Activated CD4-positive, alpha-beta memory T cell treated with anti-CD3 and anti-CD28 coated beads for 36 hours (primary cell): ENCODE measurements at regions of chr10 and their contacts with region 1.

Region 1: DNA sequence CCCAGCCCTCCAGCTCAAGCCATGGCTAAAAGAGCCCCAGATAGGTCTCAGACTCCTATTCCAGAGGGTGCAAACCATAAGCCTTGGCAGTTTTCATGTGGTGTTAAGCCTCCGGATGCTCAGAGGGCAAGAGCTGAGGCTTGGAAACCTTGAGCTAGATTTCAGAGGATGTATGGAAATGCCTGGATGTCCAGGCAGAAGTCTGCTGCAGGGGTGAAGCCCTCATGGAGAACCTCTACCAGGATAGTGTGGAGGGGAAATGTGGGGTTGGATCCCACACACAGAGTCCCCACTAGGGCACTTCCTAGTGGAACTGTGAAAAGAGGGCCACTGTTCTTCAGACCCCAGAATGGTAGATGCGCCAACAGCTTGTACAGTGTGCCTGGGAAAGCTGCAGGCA is 13.2 kb upstream of the HPSE2 start:
- DNase-seq: no peak
- H3K4me3 Mint-ChIP-seq: no peak overlapping the region
- H3K27ac Mint-ChIP-seq: no peak overlapping the region
- H3K4me1 Mint-ChIP-seq: no peaks in the 10 kb centered on the region
- H3K27me3 Mint-ChIP-seq: peaks cover 16% of the 10 kb centered on the region

Region 2: DNA sequence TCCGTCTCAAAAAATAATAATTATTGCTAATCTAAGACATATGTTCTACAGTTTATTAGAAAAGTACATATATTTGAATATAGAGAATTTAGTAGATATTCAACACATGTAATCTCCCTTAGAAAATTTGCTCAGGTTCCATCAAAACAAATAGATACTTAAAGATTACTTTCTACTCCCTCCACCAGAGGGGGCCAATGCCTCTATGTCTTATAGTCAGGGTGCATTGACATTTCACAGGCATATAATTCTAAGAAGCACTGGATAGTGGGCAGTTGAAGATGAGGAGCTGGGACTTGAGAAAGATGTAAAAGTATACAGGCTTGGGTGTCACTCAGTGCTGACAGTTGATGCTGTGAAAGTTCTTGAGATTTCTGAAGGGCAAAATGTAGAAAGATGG is 500.5 kb before region 1 on chr10:
- CTCF ChIA-PET with region 1: no interaction called
- POLR2A ChIA-PET with region 1: no interaction called
- intact Hi-C with region 1: loop called (anchors 2 kb)
- DNase-seq: no peak
- H3K4me3 Mint-ChIP-seq: no peak overlapping the region
- H3K27ac Mint-ChIP-seq: no peak overlapping the region
- H3K4me1 Mint-ChIP-seq: no peaks in the 10 kb centered on the region
- H3K27me3 Mint-ChIP-seq: no peaks in the 10 kb centered on the region

Region 3: DNA sequence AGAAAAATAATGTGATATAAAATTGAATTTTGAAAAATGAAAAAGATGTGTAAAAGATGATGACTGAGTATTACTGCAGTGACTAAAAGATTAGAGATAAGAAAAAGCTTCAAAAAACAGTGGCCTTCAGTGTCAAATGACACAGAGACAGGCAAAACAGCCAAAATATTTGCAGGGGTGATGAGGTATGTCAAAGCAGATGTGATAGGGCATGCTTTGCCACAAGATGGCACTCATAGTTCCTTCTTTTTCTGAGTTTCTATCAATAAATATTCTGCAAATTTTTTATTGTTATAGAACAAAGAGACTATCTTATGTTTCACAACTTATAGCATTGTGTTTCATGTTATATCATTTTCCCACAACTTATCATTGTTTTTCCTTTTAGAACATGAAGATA is 458.0 kb before region 1 on chr10:
- CTCF ChIA-PET with region 1: no interaction called
- POLR2A ChIA-PET with region 1: no interaction called
- intact Hi-C with region 1: loop called (anchors 5 kb)
- DNase-seq: no peak
- H3K4me3 Mint-ChIP-seq: no peak overlapping the region
- H3K27ac Mint-ChIP-seq: no peak overlapping the region
- H3K4me1 Mint-ChIP-seq: no peaks in the 10 kb centered on the region
- H3K27me3 Mint-ChIP-seq: peaks cover 1% of the 10 kb centered on the region

Region 4: DNA sequence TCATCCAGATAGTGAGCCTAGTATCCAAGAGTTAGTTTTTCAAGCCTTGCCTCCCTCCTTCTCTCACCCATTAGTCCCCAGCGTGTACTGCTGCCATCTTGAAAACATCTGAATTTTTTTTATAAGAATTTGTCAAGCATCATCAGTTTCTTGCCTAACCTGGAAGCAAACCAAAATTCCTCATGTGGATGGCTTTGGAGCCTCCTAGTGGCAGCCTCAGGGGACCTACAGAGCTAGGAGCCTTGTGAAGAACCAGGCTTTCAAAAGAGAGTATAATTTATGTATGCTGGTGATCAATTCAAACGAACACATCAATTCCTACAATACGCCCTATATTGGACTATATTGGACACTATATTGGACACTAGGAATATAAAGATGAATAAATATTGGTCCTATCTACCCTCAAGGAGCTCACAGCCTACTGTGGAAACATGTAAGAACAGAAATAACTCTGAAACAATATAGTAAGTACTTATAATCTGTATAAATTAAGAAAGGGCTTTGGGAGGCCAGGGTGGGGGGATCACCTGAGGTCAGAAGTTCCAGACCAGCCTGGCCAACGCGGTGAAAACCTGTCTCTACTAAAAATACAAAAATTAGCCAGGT is 76.6 kb before region 1 on chr10:
- CTCF ChIA-PET with region 1: no interaction called
- POLR2A ChIA-PET with region 1: no interaction called
- intact Hi-C with region 1: no loop called
- DNase-seq: no peak
- H3K4me3 Mint-ChIP-seq: no peak overlapping the region
- H3K27ac Mint-ChIP-seq: no peak overlapping the region
- H3K4me1 Mint-ChIP-seq: no peaks in the 10 kb centered on the region
- H3K27me3 Mint-ChIP-seq: peaks cover 2% of the 10 kb centered on the region

Region 5: GRCh38 chr10:99303899-99304861 is 55.4 kb after region 1 on chr10:
- CTCF ChIA-PET with region 1: no interaction called
- POLR2A ChIA-PET with region 1: no interaction called
- intact Hi-C with region 1: no loop called
- DNase-seq: no peak
- H3K4me3 Mint-ChIP-seq: no peak overlapping the region
- H3K27ac Mint-ChIP-seq: no peak overlapping the region
- H3K4me1 Mint-ChIP-seq: no peaks in the 10 kb centered on the region
- H3K27me3 Mint-ChIP-seq: peaks cover 12% of the 10 kb centered on the region